Heart right ventricle (tissue), 16 donors: ENCODE measurements at regions of chr5 and their contacts with region 1.

Region 1: DNA sequence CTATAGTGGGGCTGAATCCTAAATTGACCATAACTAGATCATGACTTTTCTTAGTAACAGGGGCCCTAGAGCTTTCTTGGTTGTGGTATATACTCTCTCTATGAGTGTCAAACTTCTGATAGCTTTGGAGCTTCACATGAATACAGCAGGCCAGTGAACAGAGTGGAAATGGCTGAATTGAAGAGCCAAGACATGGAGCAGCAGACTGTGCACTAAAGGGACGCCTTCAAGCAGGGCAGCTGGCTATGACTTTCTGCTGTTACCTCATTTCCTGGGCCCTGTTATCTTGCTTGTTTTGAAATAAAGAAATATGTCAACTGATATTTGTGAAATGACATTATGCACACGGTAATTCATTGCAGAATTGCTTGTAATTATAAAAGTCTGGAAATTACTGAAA is 16.3 kb downstream of the CDO1 start:
- DNase-seq: no peak
- ATAC-seq: peak in 1 of 8 donors; percentile 61
- H3K4me3 ChIP-seq: no peak overlapping the region
- H3K27ac ChIP-seq: no peak overlapping the region
- H3K4me1 ChIP-seq: no peaks in the 10 kb centered on the region
- H3K27me3 ChIP-seq: no peaks in the 10 kb centered on the region
- CTCF ChIP-seq: no peak

Region 2: DNA sequence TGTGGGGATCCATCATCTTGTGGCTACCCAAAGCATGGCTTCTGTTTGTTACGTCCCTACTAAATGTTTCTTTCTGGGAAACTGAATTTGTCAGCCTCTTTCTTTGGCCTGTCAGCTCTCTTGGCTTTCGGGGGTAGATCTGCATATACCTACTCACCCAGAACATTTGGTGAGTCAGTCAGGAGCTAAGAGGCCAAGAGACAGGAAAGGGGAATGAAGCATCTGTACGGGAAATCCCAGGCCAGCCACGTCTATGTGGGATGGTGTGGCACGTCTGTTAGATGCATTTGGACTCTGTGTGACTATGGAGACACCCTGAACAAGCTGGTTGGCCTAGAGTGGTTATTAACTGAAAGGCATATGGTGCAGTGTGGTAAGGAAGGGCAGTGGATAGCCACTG is 41.8 kb before region 1 on chr5:
- intact Hi-C with region 1: no loop called
- DNase-seq: no peak
- ATAC-seq: no peak
- H3K4me3 ChIP-seq: no peak overlapping the region
- H3K27ac ChIP-seq: no peak overlapping the region
- H3K4me1 ChIP-seq: no peaks in the 10 kb centered on the region
- H3K27me3 ChIP-seq: peaks cover 0 to 3% (median 0%) of the 10 kb centered on the region in 7 donors
- CTCF ChIP-seq: no peak

Region 3: DNA sequence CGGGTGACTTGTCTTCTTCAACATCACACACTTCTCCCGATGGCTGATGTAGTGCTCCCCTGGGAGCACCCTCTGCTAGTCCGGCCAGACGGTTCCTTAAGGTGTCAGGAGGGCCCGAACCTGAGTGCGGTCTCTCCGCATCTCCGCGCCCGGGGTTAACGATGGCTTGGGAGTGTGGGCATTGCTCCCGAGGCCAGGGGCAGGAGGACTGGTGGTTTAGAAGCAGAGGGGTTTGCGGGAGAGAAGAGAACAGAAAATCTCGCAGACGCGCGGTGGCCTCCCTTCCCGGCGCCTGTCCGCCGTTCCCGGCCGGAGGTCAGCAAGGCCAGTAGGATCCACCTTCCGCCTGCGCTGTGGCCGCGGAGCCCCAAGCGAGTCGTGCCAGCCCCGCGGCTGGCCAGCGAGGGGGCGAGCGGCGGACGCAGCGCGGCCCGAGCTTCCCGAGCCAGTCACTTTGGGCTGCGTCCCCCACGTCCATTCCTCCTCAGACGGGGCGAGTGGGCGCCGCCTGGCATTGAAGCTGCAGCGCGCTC is 15.6 kb after region 1 on chr5:
- intact Hi-C with region 1: loop called in 1 of 10 experiments (anchors 2 kb)
- DNase-seq: peak in 1 of 2 donors; percentile 17
- ATAC-seq: peak; percentile 21 to 51 (median 46)
- H3K4me3 ChIP-seq: peak overlapping the region; percentile 36 to 75 (median 60)
- H3K27ac ChIP-seq: peak overlapping the region in 7 of 10 donors; percentile 40 to 84 (median 81)
- H3K4me1 ChIP-seq: peaks cover 0 to 18% (median 9%) of the 10 kb centered on the region in 9 donors
- H3K27me3 ChIP-seq: peaks cover 0 to 81% (median 41%) of the 10 kb centered on the region in 7 donors
- CTCF ChIP-seq: no peak

Region 4: DNA sequence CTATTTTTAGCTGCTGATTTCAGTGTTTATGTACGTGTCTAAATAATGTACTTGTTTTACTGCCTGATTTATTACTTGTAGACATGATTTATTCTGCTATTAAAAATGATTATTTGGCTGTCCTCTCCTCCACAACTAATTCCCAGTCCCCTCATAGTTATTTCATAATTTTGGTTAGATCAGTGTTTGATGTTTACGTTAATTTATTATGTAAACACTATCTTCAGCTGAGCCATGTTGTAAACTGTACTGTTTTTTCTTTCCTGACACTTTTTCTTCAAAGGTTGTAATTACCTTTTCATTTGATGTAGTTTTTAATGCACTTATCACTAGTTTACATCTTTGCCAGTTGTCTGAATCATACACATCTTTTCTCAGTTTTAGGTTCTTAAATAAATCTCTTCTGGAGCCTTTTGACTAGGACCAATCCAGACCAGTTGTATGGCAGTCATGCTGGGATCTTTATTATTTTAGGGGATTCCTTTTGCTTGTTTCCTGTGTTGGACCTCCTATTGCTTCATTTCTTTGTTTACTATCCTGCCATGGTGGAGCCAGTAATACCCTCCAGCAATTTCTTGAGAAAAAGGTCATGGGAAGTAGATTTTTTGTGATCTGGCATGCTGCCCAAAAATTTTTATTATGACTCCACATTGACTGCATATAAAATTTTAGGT is 57.7 kb after region 1 on chr5:
- intact Hi-C with region 1: no loop called
- DNase-seq: no peak
- ATAC-seq: peak in 1 of 8 donors; percentile 35
- H3K4me3 ChIP-seq: no peak overlapping the region
- H3K27ac ChIP-seq: peak overlapping the region in 1 of 10 donors; percentile 4
- H3K4me1 ChIP-seq: peaks cover 0 to 46% (median 34%) of the 10 kb centered on the region in 9 donors
- H3K27me3 ChIP-seq: no peaks in the 10 kb centered on the region
- CTCF ChIP-seq: no peak